ENCODE measurements at regions of chr19 and their contacts with region 1.

Region 1: DNA sequence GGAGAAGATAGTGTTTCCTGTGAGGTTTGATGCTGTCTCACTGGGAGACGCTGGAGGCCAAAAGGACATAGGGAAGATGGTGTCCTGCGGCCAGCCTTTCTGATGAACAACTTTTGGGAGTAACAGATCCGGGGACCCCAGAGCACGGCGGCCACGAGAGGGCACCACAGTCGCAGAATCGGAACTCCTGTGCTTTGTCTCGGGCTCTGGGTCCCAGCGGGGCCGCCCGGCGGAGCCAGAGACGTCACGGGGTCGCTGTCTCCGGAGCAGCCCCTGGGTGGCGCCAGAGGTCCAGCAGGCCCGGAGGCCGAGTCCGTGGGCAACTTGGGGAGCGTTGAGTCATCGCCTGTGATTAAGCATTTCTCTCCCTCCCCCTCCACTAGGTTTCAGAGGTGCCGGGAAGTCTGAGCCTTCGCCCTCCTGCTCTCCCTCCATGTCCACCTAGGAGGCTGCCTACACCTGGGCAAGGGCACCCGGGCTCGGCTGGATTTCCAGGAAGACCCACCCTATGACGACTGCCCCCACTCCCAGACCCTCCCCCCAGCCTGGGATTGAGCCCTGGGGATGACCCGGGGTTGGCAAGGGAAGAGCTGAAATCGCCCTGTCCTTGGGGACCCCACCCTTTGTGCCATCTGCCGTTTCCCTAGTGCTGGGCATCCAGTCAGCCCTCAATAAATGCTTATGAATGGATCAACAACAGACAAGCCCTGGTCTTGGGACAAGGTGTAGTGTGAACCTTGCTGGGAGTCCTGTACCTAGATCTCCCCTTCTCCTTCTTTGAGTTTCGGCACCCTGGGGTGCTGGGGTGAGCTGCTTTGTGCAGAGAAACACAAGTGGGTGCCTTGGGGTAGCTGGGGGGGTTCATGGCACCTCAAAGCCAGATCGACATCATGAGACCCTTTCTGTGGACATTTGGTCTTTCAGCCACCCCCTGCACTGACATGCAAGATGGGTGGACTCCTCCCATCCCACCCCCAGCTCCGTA is 3.4 kb downstream of the NANOS3 start:
- DNase-seq: peak; percentile 96 to 99 (median 98)
- ATAC-seq: peak; percentile 96
- H3K4me3 ChIP-seq: peak overlapping the region; percentile 13 to 20
- H3K4me3 Mint-ChIP-seq: peak overlapping the region; percentile 69
- H3K27ac ChIP-seq: peak overlapping the region in 1 of 2 experiments; percentile 61
- H3K27ac Mint-ChIP-seq: peak overlapping the region; percentile 66
- H3K4me1 ChIP-seq: peaks cover 51% of the 10 kb centered on the region
- H3K4me1 Mint-ChIP-seq: peaks cover 43% of the 10 kb centered on the region
- H3K27me3 ChIP-seq: no peaks in the 10 kb centered on the region
- H3K27me3 Mint-ChIP-seq: no peaks in the 10 kb centered on the region
- CTCF ChIP-seq: peak; percentile 99

Region 2: GRCh38 chr19:13932911-13933393 is 52.6 kb after region 1 on chr19:
- CTCF ChIA-PET with region 1: interaction called, 11 read pairs
- POLR2A ChIA-PET with region 1: no interaction called
- intact Hi-C with region 1: no loop called
- DNase-seq: no peak
- ATAC-seq: no peak
- H3K4me3 ChIP-seq: no peak overlapping the region
- H3K4me3 Mint-ChIP-seq: no peak overlapping the region
- H3K27ac ChIP-seq: no peak overlapping the region
- H3K27ac Mint-ChIP-seq: no peak overlapping the region
- H3K4me1 ChIP-seq: no peaks in the 10 kb centered on the region
- H3K4me1 Mint-ChIP-seq: peaks cover 2% of the 10 kb centered on the region
- H3K27me3 ChIP-seq: peaks cover 0 to 6% of the 10 kb centered on the region in 2 experiments
- H3K27me3 Mint-ChIP-seq: peaks cover 6% of the 10 kb centered on the region
- CTCF ChIP-seq: no peak

Region 3: GRCh38 chr19:13946414-13946813 is 66.1 kb after region 1 on chr19:
- CTCF ChIA-PET with region 1: no interaction called
- POLR2A ChIA-PET with region 1: no interaction called
- intact Hi-C with region 1: no loop called
- DNase-seq: no peak
- ATAC-seq: no peak
- H3K4me3 ChIP-seq: no peak overlapping the region
- H3K4me3 Mint-ChIP-seq: no peak overlapping the region
- H3K27ac ChIP-seq: no peak overlapping the region
- H3K27ac Mint-ChIP-seq: no peak overlapping the region
- H3K4me1 ChIP-seq: no peaks in the 10 kb centered on the region
- H3K4me1 Mint-ChIP-seq: no peaks in the 10 kb centered on the region
- H3K27me3 ChIP-seq: no peaks in the 10 kb centered on the region
- H3K27me3 Mint-ChIP-seq: no peaks in the 10 kb centered on the region
- CTCF ChIP-seq: no peak

Region 4: DNA sequence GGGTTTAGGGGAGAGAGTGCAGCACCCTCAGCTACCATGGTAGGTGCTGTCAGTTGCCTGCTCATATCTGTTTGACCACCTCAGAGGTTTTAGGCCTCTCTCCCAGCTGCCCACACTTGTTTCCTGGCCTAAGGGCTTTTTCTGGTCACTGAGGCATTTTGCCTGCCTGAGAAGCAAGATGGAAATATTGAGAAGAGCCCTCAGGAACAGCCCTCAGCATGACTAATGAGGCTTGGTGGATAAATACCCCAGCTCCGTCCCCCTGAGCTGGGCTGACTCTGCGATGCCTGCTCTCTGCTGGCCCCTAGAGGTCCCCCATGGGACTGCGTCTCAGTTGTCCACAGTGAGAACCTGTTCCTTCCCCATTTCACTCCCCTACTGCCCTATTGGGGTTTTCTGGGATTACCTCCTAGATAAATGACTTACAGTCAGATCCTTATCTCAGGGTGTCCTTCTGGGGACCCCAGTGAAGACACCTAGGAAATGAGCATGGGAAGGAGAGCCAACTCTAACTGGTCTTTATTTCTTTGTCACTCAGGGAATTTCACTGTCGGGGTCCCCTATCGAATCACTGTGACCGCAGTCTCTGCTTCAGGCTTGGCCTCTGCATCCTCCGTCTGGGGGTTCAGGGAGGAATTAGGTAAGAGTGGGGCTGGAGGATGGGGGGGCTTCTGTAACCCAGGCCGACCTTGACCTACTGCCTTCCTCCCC is 168.2 kb after region 1 on chr19:
- CTCF ChIA-PET with region 1: interaction called, 70 read pairs
- POLR2A ChIA-PET with region 1: interaction called, 3 read pairs
- intact Hi-C with region 1: loop called (anchors 1 kb)
- DNase-seq: peak; percentile 52 to 85 (median 78)
- ATAC-seq: peak; percentile 98
- H3K4me3 ChIP-seq: no peak overlapping the region
- H3K4me3 Mint-ChIP-seq: no peak overlapping the region
- H3K27ac ChIP-seq: peak overlapping the region in 1 of 2 experiments; percentile 34
- H3K27ac Mint-ChIP-seq: peak overlapping the region; percentile 41
- H3K4me1 ChIP-seq: no peaks in the 10 kb centered on the region
- H3K4me1 Mint-ChIP-seq: peaks cover 7% of the 10 kb centered on the region
- H3K27me3 ChIP-seq: no peaks in the 10 kb centered on the region
- H3K27me3 Mint-ChIP-seq: no peaks in the 10 kb centered on the region
- CTCF ChIP-seq: peak; percentile 94

Region 5: GRCh38 chr19:14081325-14082093 is 201.2 kb after region 1 on chr19:
- CTCF ChIA-PET with region 1: interaction called, 27 read pairs
- POLR2A ChIA-PET with region 1: no interaction called
- intact Hi-C with region 1: no loop called
- DNase-seq: peak; percentile 98 to 100 (median 99)
- ATAC-seq: peak; percentile 93
- H3K4me3 ChIP-seq: peak overlapping the region; percentile 77 to 89
- H3K4me3 Mint-ChIP-seq: peak overlapping the region; percentile 91
- H3K27ac ChIP-seq: peak overlapping the region; percentile 60 to 83
- H3K27ac Mint-ChIP-seq: peak overlapping the region; percentile 90
- H3K4me1 ChIP-seq: peaks cover 17% of the 10 kb centered on the region
- H3K4me1 Mint-ChIP-seq: peaks cover 20% of the 10 kb centered on the region
- H3K27me3 ChIP-seq: no peaks in the 10 kb centered on the region
- H3K27me3 Mint-ChIP-seq: no peaks in the 10 kb centered on the region
- CTCF ChIP-seq: no peak

Region 6: DNA sequence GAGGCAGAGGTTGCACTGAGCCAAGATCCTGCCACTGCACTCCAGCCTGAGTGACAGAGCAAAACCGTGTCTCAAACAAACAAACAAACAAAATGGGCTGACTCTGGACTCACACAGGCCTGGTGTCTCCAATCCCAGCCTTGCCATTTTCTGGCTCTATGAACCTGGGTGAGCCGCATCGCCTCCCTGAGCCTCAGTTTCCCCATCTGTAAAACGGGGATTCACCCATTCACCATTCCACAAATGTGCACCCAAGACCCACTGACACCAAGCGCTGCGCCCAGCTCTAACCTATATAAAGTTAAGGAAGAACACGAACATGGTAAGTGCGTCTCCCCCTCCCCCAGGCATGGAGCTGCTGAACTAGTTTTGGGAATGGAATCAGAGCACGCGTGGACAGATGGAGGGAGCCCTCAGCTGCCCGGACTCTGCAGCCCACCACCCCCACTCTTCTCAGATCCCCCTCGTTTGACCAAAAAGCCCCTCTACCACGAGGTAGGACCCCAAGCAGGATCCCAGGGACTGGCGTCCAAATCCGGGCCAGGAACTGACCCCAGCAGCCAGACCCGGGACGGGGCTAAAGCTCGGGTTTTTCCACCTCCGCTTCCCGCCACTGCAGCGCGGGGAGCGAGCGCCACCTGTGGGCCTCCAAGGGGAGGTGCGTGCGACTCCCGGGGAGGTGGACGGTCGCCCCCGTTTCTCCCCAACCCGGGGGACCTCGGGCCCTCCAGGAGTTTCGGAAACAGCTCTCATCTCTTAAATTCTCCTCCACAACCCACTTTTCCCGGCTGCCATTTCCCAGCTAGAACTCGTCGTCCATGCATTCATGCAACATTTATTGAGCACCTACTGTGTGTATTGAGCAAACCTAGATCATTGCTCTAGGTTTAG is 467.9 kb after region 1 on chr19:
- CTCF ChIA-PET with region 1: no interaction called
- POLR2A ChIA-PET with region 1: no interaction called
- intact Hi-C with region 1: loop called in 1 of 2 experiments (anchors 1 kb)
- DNase-seq: peak; percentile 31 to 85 (median 64)
- ATAC-seq: peak; percentile 82
- H3K4me3 ChIP-seq: peak overlapping the region; percentile 19 to 20
- H3K4me3 Mint-ChIP-seq: peak overlapping the region; percentile 15
- H3K27ac ChIP-seq: no peak overlapping the region
- H3K27ac Mint-ChIP-seq: no peak overlapping the region
- H3K4me1 ChIP-seq: peaks cover 19% of the 10 kb centered on the region
- H3K4me1 Mint-ChIP-seq: peaks cover 13% of the 10 kb centered on the region
- H3K27me3 ChIP-seq: no peaks in the 10 kb centered on the region
- H3K27me3 Mint-ChIP-seq: no peaks in the 10 kb centered on the region
- CTCF ChIP-seq: peak; percentile 92